Head of caudate nucleus (tissue), 42 donors: ENCODE measurements at regions of chr4 and their contacts with region 1.

Region 1: DNA sequence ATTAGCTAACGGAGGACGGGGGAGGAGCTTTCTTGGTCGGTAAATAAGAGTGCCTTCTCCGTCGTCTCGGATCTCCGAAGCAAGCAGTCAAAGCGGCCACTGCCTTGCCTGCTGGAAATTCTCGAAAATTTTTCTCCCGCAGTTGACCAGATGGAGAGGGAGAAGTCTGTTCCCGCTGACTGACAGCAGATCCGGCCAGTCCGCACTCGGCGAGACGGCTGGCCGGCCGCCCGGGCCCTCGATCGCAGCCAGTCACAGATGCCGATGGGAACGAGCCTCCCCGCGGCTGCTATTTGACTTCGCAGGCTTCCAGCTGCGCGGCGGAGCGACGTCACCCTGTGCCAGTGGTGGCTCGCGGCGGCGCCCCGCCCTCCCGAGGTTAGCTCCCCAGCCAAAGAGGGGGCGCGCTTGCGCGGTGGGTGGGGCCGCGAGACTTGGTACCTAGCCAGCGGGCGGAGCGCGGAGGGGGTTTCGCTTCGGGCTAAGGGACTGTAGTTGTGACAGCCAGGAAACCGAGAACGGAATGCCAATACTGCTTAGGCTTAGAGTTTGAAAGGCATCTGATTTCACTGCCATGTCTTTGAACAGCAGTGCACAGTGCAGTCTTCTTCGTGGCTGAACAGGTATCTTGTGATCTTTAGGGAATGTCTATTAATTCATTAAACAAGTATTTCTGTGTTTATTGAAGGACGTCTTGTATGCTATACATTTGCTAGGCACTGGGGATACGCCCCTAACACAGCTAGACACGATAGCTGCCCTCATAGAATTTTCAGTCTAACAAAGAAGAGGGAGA is at the start of gene PPM1K:
- DNase-seq: peak; percentile 98 to 100 (median 99)

Region 2: DNA sequence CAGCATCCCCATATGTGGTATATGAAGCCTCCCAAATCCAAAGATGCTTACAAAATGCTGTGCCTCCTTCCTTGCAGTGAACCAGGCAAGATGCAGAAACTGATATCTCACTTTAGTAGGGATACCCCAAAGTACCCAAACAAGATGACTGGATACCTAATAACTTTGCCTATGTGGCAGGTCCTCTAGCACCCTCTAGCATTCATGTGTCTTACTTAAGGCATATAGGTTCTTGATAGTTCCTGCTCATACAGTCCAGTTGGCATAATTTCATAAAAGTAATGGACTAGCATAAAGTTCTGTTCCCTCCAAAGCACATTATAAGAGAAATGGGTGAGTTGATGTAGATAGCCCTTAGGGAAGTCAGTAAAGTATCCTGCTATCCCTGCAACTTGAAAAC is 345.9 kb before region 1 on chr4:
- intact Hi-C with region 1: no loop called
- DNase-seq: no peak

Region 3: GRCh38 chr4:88007304-88008121 is 277.1 kb before region 1 on chr4 and contains the start of gene PKD2:
- intact Hi-C with region 1: loop called (anchors 5 kb)
- DNase-seq: peak; percentile 47 to 96 (median 90)

Region 4: DNA sequence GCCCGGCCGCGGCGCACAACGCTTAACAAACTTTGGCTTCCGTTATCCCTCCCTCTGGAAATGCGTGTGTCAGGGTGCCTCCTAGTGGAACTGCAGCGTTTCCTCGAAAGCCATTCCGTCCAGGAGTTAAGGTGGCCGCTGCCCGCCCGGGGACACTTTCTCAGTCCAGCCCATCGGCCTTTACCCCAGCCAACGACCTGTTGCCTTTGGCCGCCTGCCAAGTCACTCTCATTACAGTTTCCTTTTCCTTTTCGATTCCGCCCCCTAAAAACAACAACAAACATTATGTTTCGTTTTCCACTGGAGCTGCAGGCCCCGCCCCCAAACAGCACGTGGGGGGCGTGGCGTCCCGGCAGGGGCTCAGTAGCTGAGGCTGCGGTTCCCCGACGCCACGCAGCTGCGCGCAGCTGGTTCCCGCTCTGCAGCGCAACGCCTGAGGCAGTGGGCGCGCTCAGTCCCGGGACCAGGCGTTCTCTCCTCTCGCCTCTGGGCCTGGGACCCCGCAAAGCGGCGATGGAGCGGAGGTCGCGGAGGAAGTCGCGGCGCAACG is 172.2 kb after region 1 on chr4 and contains the start of gene HERC5:
- intact Hi-C with region 1: loop called (anchors 5 kb)
- DNase-seq: peak; percentile 61 to 92 (median 79)

Region 5: DNA sequence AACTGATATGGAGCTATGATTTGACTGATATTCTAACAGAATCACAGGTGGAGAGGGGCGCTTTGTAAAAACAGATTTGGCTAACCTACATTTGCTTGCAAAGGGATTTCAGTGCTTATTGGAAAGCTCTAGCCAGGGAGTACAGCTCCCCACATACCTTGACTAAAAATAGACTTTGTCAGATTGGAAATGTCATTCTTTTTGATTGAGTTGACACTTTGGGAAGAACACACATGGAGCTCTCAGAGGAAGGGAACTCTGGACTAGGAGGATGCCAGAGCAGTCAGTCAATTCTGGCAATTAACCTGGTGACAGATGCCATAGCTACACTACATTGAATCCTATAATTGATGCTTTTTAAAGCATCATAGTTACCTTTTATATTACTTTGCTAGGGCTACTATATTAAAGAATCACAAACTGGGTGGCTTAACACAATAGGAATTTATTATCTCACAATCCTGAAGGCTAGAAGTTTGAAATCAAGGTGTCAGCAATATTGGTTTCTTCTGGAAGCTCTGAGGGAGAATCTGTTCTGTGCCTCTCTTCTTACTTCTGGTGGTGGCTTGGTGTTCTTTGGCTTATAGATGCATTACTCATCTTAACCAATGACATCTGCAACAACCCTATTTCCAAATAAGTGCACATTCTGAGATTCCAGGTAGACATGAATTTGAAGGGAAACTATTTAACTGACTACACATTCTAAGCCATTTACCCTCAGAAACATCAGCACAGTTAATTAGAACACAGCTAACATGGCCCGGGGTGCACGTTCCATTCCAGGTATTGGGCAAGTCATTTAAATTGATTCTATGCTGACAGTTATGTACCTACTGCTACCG is 299.2 kb after region 1 on chr4:
- intact Hi-C with region 1: no loop called
- DNase-seq: peak in 1 of 42 donors; percentile 15

Region 6: GRCh38 chr4:88765729-88766128 is 481.1 kb after region 1 on chr4:
- intact Hi-C with region 1: no loop called
- DNase-seq: peak in 1 of 42 donors; percentile 42